Right ventricle myocardium inferior (tissue), 1 donor: ENCODE measurements at regions of chr13 and their contacts with region 1.

Region 1: DNA sequence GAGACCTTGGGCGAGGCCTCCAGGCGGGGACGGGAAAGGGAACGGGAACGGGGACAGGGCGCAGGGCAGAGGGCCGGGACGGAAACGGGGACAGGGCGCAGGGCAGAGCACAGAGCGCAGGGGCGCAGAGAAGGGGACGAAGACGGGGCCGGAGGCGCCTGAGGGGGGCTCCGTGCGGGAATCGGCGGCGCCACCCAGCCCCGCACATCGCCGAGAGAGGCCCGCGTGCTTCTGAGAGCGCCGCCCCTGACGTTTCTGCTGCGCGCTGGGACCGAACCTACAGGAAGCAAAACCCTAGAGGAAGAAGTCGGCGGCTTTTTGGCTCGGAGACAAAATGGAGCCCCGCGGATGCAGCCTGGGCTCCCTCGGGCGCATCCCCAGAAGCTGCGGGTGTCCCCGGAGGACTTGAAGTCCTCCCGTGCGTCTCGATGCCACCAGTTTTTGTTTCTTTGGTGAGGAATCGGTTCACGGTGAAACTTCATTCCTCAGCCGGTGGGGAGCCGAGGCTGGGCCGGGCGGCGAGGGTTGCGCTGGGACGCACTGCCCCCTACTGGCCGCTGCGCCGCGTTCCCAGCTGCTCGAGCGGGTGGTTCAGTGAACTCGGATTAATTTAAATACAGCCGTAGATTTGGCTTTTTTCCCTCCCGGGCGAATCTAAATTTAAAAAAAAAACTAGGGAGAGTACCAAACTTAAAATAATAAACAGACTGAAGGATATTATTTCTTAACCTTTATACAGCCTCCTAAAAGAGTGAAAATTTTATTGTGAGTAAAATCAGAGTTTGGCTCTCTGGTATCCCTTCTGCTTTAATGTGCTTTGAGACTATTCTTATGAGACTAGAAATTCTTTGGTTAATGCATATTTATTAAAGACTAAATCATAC is 350.0 kb upstream of the ARGLU1 start:
- DNase-seq: peak; percentile 84
- ATAC-seq: peak; percentile 94

Region 2: GRCh38 chr13:106117035-106117434 is 800.9 kb before region 1 on chr13:
- intact Hi-C with region 1: no loop called
- DNase-seq: no peak
- ATAC-seq: no peak

Region 3: GRCh38 chr13:106619688-106620555 is 298.0 kb before region 1 on chr13:
- intact Hi-C with region 1: loop called (anchors 2 kb)
- DNase-seq: no peak
- ATAC-seq: peak; percentile 84

Region 4: GRCh38 chr13:106753251-106753650 is 164.7 kb before region 1 on chr13:
- intact Hi-C with region 1: loop called (anchors 5 kb)
- DNase-seq: no peak
- ATAC-seq: no peak

Region 5: DNA sequence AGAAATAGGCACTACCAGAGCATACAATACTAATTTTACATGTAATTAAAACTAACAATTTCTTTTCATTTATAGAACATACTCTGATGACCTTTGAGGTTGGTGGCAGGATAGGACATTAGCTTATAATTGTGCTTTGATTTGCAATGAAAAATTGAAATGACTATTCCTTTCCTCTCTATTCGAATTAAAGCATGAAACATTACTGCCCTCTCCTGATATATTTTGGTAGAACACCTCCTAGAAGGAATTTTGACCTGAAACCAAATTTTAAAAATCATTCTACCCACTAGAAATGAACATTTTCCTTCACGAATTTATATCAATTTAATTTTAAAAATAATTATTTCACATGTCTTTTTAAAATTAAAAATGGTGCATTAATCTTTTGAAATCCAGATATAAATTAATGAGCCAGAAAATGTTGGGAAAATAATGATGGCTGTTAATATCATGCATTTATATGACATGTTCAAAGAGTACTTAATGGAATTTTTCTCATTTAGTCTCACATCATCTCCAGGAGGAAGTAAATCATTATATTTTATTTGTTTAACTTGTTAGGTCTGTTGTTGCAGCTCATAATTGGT is 206.3 kb after region 1 on chr13:
- intact Hi-C with region 1: loop called (anchors 2 kb)
- DNase-seq: no peak
- ATAC-seq: no peak

Region 6: DNA sequence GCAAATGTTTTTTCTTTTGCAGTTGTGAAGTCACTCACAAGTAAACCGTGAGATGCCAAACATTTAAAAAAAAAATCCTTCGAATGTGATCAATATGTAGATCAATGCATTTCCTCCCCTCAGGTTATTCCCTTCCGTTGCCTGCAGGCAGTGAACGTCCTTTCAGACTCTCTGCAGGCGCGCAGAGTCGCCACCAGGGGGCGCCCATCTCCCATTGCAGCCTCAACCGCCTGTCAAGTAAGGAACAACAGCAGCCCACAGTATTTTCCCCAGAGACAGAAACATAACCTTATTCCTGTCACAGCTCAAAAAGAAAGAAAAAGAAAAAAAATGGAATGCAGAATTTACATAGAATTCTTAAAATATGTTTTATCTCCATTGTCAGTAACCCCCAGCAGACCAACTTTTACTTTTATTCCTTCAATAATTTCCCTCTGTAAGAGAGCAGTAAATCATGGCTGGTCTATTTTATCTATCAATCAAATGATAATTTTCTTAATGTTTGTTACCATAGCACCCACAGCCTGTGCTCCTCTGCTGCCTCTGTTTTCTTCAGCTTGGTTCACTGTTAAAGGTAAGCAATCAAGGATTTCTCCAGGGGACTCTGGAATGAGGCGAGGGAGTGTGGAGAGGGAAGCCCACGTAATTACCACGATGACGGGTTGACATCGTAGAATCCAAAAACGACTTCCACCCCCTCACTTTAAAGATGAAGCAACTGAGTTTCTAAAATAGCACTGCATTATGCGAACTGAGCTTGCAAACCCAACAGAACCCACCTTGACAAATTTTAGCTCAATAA is 287.6 kb after region 1 on chr13:
- intact Hi-C with region 1: loop called (anchors 10 kb)
- DNase-seq: peak; percentile 71
- ATAC-seq: peak; percentile 73